Activated naive CD4-positive, alpha-beta T cell treated with anti-CD3 and anti-CD28 coated beads, Interleukin-2, amount 10 ng/mL, durations not matched to agents 7 days and 5 days (primary cell): ENCODE measurements at regions of chr6 and their contacts with region 1.

Region 1: GRCh38 chr6:125974214-125974866 is 12.0 kb upstream of the TRMT11 start:
- DNase-seq: no peak
- H3K4me3 Mint-ChIP-seq: no peak overlapping the region
- H3K27ac Mint-ChIP-seq: no peak overlapping the region
- H3K4me1 Mint-ChIP-seq: peaks cover 6% of the 10 kb centered on the region
- H3K27me3 Mint-ChIP-seq: no peaks in the 10 kb centered on the region

Region 2: DNA sequence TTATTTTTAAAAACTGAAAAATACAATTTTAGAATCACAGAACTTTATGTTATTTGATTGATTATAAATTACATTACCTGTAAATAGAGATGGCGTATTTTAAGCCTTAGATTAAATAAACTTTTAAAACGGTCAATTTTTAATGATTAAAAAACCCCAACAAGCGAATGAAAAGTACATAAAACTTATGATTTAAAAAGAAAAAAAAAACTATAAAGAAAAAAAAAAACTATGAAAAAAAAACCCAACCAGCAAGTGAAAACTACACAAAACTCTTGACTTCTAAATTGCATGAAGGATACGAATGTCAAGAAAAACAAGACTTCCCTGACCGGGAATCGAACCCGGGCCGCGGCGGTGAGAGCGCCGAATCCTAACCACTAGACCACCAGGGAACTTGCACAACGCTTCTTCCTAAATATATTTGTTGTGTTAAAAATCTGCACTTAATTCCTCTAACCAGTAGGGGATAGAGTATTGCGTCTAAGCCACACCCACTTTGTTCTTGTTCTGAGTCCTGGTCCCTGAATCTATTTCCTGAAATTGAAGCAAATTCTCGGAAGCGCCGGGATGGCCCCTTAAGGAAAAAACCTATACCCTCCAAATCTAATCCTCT is 194.3 kb before region 1 on chr6:
- CTCF ChIA-PET with region 1: interaction called, 11 read pairs
- DNase-seq: peak; percentile 87
- H3K4me3 Mint-ChIP-seq: no peak overlapping the region
- H3K27ac Mint-ChIP-seq: no peak overlapping the region
- H3K4me1 Mint-ChIP-seq: peaks cover 16% of the 10 kb centered on the region
- H3K27me3 Mint-ChIP-seq: peaks cover 20% of the 10 kb centered on the region

Region 3: DNA sequence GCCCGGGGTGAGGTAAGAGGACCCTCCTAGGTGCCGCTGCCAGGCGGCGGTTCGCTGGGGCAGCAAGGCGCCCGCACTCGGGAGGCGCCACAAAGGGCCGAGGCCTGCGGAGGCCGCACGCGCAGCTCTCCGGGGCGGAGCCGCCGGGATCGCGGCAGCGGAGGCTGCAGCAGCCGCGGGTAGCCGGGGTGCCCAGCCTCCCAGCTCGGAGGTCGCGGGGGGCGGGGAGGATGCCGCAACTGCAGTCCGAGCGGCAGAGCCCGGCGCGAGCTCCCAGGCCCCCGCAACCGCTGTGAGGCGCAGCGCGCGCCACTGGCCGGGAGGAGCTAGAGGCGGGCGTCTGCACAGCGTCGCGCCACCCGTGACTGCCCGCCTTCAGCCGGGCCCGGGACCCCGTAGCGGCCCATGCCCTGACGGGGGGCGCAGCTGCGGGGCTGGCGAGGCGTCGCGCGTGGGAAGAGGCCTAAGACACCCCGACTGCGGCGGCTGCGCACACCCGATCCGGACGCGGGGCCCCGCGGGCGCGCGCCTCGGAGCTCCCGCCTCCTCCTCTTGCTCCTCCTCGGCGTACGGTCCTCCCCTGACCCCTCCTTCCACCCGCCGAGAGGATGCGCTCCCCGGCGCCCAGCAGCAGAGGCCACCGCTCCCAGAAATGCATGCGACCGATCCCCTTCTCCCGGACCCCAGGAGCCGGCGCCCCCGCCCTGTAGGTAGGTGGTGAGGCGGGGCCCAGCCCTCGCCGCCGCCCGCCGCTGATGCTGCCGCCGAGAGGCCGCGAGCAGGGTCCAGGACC is 183.8 kb before region 1 on chr6 and contains the start of gene NCOA7:
- CTCF ChIA-PET with region 1: interaction called, 33 read pairs
- DNase-seq: peak; percentile 87
- H3K4me3 Mint-ChIP-seq: peak within 1 kb of the TSS; percentile 91
- H3K27ac Mint-ChIP-seq: peak within 1 kb of the TSS; percentile 99
- H3K4me1 Mint-ChIP-seq: peaks cover 55% of the 10 kb centered on the region
- H3K27me3 Mint-ChIP-seq: no peaks in the 10 kb centered on the region

Region 4: GRCh38 chr6:125858427-125859320 is 115.7 kb before region 1 on chr6:
- CTCF ChIA-PET with region 1: interaction called, 13 read pairs
- DNase-seq: peak; percentile 37
- H3K4me3 Mint-ChIP-seq: no peak overlapping the region
- H3K27ac Mint-ChIP-seq: no peak overlapping the region
- H3K4me1 Mint-ChIP-seq: no peaks in the 10 kb centered on the region
- H3K27me3 Mint-ChIP-seq: no peaks in the 10 kb centered on the region

Region 5: GRCh38 chr6:125963817-125964216 is 10.5 kb before region 1 on chr6:
- CTCF ChIA-PET with region 1: interaction called, 11 read pairs
- DNase-seq: no peak
- H3K4me3 Mint-ChIP-seq: no peak overlapping the region
- H3K27ac Mint-ChIP-seq: no peak overlapping the region
- H3K4me1 Mint-ChIP-seq: no peaks in the 10 kb centered on the region
- H3K27me3 Mint-ChIP-seq: no peaks in the 10 kb centered on the region

Region 6: DNA sequence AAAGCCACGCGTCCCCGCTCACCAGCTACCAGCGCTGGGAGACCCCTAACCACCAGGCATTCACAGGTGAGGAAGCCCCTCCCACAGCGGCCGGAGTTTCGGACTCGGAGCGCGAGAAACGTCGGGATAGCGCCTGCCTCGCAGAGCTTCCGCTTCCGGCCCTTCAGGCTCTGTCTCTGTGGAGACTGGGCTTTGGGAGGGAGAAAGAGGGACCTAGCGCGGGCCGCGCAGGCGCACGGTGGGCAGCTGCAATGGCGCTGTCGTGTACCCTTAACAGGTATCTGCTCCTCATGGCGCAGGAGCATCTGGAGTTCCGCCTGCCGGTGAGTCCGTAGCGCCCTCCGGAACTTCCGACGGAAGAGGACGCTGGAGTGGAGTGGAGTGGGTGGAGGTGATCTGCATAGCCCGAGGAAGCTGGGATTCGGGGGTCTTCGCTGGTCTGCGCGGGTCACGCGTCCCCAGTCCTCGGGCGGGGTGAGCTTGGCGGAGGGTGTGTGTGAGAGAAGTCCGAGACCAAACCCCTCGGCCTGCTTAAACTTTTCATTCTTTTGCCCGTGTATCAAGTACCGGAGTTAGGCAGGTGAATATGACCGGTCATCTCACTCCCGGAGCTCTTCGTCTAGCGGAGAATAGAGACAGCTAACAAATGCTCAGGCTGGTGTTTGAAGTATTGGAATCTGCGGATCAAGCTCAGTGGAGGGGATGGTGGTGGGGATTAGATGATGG is 12.1 kb after region 1 on chr6 and contains the start of gene TRMT11:
- CTCF ChIA-PET with region 1: interaction called, 20 read pairs
- DNase-seq: peak; percentile 86
- H3K4me3 Mint-ChIP-seq: peak within 1 kb of the TSS; percentile 35
- H3K27ac Mint-ChIP-seq: no peak within 1 kb of the TSS
- H3K4me1 Mint-ChIP-seq: peaks cover 13% of the 10 kb centered on the region
- H3K27me3 Mint-ChIP-seq: no peaks in the 10 kb centered on the region